ENCODE measurements at regions of chr5 and their contacts with region 1.

Region 1: DNA sequence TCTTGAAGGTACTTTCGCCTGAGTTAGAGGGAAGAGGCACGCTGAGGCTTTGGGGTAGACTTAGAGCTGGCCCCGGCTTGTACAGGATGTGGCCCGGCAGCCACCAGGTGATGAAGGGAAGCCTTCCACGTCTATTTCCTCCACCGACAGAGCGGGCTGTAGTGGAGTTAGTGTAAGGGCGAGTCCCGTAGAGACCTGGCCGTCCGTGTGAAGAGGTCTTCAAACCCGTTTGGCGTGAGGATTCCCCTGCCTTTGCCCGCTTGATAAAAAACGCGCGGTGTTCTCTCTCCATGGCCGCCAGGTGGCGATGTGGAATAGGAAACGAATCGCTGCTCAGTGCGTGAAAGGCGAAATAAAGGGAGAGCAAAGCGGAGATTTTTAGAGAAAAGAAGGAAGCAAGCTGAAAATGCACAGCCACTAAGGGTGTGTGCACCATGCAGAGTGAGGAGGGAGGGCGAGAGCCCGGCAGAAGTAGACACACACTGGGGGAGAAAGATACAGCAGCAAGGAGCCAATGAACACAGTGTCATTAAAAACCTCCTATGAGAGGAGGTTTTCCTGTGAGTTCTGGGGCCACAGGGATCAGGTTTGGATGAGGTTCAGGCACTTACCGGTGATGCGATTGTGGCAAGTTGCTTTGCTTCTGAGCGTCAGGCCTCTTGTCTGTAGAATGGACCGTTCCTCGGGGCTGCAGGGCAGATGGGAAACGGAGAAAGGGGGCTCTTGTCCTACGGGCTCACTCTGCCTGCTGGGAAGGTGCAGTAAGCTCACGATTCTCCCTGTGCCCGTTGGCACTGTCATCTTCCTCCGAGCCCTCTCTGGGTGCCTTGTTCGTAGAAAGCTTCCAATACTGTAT is 34.2 kb downstream of the STC2 start:
- DNase-seq: peak; percentile 73 to 88 (median 78)
- H3K4me3 ChIP-seq: peak overlapping the region in 45 of 59 donors; percentile 2 to 58 (median 31)
- H3K27ac ChIP-seq: no peak overlapping the region
- H3K27me3 ChIP-seq: peaks cover 0 to 7% (median 0%) of the 10 kb centered on the region in 45 donors
- CTCF ChIP-seq: peak; percentile 85 to 99 (median 94)

Region 2: DNA sequence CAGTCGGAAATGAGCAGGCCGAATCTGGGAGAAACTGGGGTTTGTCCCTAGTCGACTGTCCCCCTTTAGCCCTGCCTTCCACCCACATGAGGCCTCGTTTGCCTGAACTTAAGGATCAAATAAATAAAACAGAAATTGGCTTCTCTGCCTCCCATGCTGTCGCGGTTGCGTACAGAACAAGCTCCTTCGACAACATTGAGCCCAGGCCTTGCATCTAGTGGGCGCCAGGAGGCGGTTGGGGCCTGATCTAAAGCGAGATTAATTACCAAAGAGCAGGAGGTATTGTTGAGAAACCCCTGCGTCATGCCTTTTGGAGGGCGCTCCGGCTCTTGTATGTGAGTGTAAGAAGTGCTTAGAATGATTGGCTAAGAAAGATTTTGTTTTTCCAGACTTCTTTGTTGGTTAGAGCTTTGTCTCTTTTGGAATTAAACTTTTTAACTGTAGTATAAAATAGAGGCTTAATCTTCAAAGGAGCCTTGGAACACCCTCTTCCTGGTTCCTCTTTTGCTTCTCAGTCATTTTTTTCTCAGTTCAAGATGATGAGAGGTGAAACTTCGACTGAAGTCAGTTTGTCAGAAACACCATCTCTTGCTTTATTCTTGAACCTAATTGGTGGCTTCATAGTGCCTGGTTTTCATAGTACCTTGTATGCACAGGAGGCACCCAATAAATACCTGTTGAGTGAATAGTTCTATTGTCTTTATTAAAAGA is 309.6 kb before region 1 on chr5:
- intact Hi-C with region 1: loop called in 1 of 2 experiments (anchors 5 kb)
- DNase-seq: peak in 9 of 10 donors; percentile 10 to 71 (median 57)
- H3K4me3 ChIP-seq: peak overlapping the region; percentile 59 to 100 (median 93)
- H3K27ac ChIP-seq: peak overlapping the region; percentile 67 to 97 (median 91)
- H3K27me3 ChIP-seq: no peaks in the 10 kb centered on the region
- CTCF ChIP-seq: peak in 34 of 56 donors; percentile 11 to 49 (median 25)

Region 3: DNA sequence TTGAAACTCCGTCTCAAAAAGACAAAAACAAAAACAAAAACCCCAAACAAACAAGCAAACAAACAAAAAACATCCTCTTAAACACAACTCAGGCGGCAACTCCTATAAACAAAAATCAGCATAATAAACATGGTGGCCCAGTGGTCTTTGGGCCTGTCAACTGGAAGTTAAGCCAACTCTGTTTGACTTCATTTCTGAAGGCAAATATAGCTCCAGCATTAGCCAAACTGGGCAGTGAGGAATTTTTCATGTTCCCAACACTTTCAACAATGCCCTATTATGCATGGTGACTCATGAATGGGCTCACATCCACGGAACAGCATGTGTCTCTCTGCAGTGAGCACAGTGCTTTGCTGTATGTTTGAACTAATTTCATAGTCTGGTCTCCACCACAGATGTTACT is 178.1 kb after region 1 on chr5:
- intact Hi-C with region 1: loop called in 1 of 2 experiments (anchors 5 kb)
- DNase-seq: peak; percentile 47 to 96 (median 84)
- H3K4me3 ChIP-seq: peak overlapping the region in 6 of 59 donors; percentile 3 to 31 (median 8)
- H3K27ac ChIP-seq: peak overlapping the region; percentile 76 to 100 (median 97)
- H3K27me3 ChIP-seq: no peaks in the 10 kb centered on the region
- CTCF ChIP-seq: peak in 11 of 56 donors; percentile 10 to 49 (median 28)

Region 4: DNA sequence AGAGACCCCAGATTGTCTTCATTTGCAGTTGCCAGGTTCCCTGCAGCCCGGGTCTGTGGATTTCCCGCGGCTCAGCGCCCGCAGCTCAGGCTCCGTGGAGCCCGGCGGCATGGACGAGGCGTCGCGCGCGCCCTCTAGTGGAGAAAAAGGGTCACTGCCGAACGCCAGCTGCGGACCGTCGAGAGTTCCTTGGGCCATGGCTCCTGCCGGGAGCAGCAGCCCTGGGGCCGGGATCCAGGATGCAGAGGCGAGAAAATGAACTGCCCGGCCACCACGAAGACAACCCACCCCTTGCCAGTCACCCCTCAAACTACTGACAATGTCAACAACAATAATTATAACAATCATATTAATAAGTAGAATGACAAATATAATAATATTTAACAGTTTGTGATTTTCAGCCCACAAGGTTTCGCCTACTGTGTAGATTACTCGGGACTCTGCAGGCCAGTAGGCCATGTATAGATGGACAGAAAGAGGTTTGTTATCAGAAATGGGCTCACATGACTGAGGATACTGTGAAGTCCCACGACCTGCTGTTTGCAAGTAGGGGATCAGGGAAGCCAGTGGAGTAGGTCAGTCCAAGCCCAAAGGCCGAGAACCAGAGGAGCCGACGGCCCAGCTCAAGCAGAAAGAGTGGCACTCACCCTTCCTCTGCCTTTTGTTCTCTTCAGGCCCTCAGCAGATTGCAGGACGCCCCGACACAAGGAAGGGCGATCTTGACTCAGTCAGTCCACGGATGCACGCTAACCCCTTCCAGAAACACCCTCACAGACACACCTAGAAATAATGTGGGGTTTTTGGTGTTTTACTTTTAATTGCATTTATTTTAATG is 279.3 kb after region 1 on chr5:
- intact Hi-C with region 1: loop called (anchors 2 to 5 kb)
- DNase-seq: peak; percentile 69 to 92 (median 78)
- H3K4me3 ChIP-seq: peak overlapping the region in 45 of 59 donors; percentile 5 to 59 (median 39)
- H3K27ac ChIP-seq: peak overlapping the region in 16 of 59 donors; percentile 5 to 65 (median 30)
- H3K27me3 ChIP-seq: no peaks in the 10 kb centered on the region
- CTCF ChIP-seq: peak; percentile 92 to 100 (median 98)

Region 5: DNA sequence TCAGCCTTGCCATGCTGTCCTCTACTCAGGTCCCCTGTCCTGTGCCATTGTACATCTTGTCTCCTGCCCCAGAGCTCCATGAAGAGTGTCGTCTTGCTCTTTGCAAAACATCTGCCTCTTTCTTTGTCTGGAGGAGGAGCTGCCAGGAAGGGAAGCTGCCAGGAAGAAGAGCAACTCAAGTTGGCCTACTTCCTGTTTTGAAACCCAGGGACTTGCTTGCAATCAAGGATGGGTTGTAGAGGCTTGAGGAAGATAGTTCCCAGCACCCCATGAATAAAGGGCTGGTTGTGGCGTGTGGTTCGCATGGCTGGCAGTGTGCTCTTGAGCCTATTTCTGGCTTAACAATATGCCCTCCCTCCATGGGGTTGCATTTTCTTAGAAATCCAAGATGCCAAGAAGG is 541.1 kb after region 1 on chr5:
- intact Hi-C with region 1: no loop called
- DNase-seq: peak in 2 of 10 donors; percentile 12 to 29
- H3K4me3 ChIP-seq: no peak overlapping the region
- H3K27ac ChIP-seq: peak overlapping the region in 3 of 59 donors; percentile 9 to 19 (median 14)
- H3K27me3 ChIP-seq: no peaks in the 10 kb centered on the region
- CTCF ChIP-seq: no peak

Region 6: DNA sequence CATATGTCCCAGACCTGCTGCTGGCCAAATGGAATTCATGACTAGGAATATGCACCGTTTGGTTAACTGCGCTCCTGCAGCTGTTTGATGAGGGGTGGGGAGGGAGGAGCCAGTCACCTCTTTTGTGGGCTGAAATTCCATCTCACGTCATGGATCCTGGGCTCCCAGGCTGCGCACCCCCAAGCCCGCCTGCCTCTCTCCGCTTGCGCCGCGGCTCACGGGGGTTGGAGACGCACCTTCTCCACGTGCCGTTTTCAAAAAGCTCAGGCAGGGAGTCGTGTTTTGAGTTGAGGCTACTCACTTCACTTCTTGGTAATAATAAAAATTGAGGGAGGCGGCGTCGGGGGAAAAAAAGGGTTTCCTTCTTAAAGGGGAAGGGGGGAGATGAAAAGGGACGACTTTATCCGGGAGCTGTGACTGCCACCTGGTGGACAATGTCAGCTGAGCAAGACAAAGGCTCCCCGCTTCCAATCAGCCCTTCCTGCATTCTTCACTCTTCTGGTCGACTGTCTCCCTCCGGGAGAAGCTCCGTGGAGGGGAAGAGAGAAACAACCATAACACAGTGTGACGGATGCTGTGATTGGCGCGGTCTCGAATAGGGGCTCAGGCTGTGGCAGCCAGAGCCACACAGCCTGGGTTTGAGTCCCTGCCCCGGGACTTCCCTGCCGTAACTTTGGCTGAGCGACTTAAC is 679.0 kb after region 1 on chr5:
- intact Hi-C with region 1: loop called in 1 of 2 experiments (anchors 10 kb)
- DNase-seq: peak; percentile 74 to 93 (median 88)
- H3K4me3 ChIP-seq: peak overlapping the region; percentile 34 to 79 (median 64)
- H3K27ac ChIP-seq: peak overlapping the region in 55 of 59 donors; percentile 9 to 87 (median 69)
- H3K27me3 ChIP-seq: no peaks in the 10 kb centered on the region
- CTCF ChIP-seq: peak; percentile 83 to 98 (median 94)

Region 7: GRCh38 chr5:174311531-174312269 is 1017.7 kb after region 1 on chr5:
- intact Hi-C with region 1: loop called in 1 of 2 experiments (anchors 10 kb)
- DNase-seq: peak; percentile 67 to 88 (median 78)
- H3K4me3 ChIP-seq: peak overlapping the region; percentile 26 to 69 (median 56)
- H3K27ac ChIP-seq: peak overlapping the region in 24 of 59 donors; percentile 3 to 86 (median 52)
- H3K27me3 ChIP-seq: no peaks in the 10 kb centered on the region
- CTCF ChIP-seq: peak; percentile 77 to 98 (median 93)

Measured in dorsolateral prefrontal cortex (tissue), 120 donors.